ENCODE measurements at regions of chr10 and their contacts with region 1.

Region 1: GRCh38 chr10:3720228-3721019 is 64.6 kb downstream of the KLF6 start:
- DNase-seq: no peak
- H3K4me3 ChIP-seq: no peak overlapping the region
- H3K27ac ChIP-seq: no peak overlapping the region
- H3K4me1 ChIP-seq: no peaks in the 10 kb centered on the region
- H3K27me3 ChIP-seq: no peaks in the 10 kb centered on the region
- CTCF ChIP-seq: no peak
- POLR2A ChIP-seq: no peak

Region 2: DNA sequence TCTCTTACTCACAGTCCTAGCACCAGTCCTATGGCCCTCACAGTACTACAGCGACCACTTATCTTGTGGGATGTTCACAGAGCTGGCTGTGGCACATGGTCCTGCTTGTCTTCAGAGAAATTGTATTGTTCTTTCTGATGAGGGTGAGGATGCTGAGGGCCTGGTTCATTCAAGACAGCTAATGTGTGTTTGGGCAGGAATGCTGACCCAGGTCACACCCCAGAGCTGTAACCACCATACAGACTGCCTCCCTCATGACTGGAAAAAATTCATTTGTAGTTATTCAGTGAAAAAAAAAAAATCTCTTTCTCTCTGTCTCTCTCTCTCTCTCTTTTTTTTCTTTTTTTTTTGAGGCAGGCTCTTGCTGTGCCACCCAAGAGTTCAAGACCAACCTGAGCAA is 18.9 kb before region 1 on chr10:
- intact Hi-C with region 1: loop called (anchors 1 kb)
- DNase-seq: no peak
- H3K4me3 ChIP-seq: no peak overlapping the region
- H3K27ac ChIP-seq: no peak overlapping the region
- H3K4me1 ChIP-seq: no peaks in the 10 kb centered on the region
- H3K27me3 ChIP-seq: no peaks in the 10 kb centered on the region
- CTCF ChIP-seq: no peak
- POLR2A ChIP-seq: no peak